AG04449 (cell line): ENCODE measurements at regions of chr12 and their contacts with region 1.

Region 1: GRCh38 chr12:9634177-9634803 is 26.6 kb upstream of the KLRB1 start:
- DNase-seq: no peak
- H3K4me3 ChIP-seq: no peak overlapping the region
- CTCF ChIP-seq: peak; percentile 57

Region 2: DNA sequence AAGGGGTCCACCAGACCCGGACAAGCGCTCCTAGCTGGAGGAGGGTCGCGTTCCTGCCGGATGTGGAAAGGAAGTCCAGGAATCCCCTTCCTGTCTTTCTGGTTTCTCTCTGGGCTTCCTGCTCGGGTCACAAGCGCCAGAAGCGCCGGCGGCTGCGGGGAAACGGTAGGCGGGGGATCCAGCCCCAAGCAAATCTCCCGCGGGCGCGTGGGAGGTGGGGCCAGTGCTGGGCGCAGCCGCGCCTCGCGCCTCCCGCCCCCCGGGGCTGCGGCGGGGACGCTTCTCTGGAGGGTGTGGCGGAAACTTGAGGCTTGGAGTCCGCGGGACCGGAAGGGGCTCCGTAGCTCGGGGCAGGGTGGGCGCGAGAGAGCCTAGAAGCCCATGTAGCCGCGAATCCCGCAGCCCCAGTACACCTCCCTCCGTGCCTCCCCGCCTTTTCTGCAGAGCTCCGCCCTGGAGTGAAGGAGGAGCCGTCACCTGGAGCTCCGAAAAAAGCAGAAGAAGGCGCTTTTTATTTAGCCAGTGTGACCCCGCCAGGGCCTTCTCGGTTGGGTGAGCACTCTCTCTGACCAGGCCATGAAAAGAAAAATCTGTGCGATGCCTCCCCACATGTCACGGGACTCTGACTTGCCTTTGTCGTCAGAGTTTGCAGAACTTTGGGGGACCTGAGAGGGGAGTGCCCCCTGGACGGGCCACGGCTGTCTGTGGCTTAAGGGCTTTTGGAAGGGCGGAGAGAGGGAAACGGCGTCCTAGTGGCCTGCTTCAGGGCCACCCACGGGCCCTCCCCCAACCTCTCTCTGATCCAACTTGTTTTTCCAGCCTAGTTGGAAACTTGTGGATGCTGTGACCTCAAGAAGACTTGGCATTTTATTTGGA is 13.8 kb after region 1 on chr12:
- CTCF ChIA-PET with region 1: interaction called, 19 read pairs
- POLR2A ChIA-PET with region 1: no interaction called
- DNase-seq: no peak
- H3K4me3 ChIP-seq: peak overlapping the region; percentile 74
- CTCF ChIP-seq: no peak

Region 3: DNA sequence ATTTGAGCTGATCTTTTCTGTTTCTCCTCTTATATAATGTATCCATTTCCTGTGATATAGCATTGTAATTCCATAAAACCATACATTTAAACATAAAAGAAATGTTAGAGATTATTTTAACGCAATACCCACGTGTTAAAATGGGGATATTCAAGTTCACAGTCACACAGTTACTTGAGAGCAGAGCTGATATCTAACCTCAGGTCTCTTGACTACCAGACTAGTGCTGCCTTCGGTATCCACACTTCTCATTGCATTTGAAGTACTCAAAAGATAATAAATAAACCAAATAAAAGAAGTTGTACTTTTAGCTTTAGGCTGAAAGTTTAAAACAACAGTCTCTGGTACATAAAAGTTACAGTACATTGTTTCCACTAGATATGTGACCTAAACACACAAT is 95.7 kb after region 1 on chr12:
- CTCF ChIA-PET with region 1: no interaction called
- POLR2A ChIA-PET with region 1: no interaction called
- DNase-seq: no peak
- H3K4me3 ChIP-seq: no peak overlapping the region
- CTCF ChIP-seq: no peak